ENCODE measurements at regions of chr2 and their contacts with region 1.

Region 1: DNA sequence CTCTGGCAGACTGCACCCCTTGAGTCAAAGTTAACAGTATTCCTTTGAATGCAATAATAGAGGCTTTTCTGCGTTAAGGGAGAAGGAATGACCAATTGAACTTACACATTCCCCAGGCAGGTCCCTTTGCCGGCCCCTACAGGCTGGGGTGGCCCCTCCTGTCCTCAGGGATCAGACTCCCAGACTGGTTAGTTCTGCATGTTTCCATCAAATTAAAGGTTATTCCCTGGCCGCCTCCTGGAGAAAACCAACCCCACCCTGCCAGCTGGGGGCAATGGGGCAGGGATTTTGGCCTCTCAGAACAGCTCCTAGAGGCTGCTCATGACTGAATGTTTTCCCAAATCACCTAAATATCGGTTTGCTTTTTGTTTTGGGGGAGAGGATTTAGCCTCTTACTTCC is 199.6 kb downstream of the MGAT5 start:
- DNase-seq: no peak
- H3K4me3 Mint-ChIP-seq: no peak overlapping the region
- H3K27ac Mint-ChIP-seq: no peak overlapping the region
- H3K4me1 Mint-ChIP-seq: peaks cover 5% of the 10 kb centered on the region
- H3K27me3 Mint-ChIP-seq: no peaks in the 10 kb centered on the region
- CTCF ChIP-seq: no peak

Region 2: GRCh38 chr2:133886735-133887660 is 566.5 kb before region 1 on chr2:
- CTCF ChIA-PET with region 1: interaction called, 23 read pairs
- POLR2A ChIA-PET with region 1: no interaction called
- intact Hi-C with region 1: loop called (anchors 1 kb)
- DNase-seq: peak; percentile 87
- H3K4me3 Mint-ChIP-seq: no peak overlapping the region
- H3K27ac Mint-ChIP-seq: no peak overlapping the region
- H3K4me1 Mint-ChIP-seq: peaks cover 7% of the 10 kb centered on the region
- H3K27me3 Mint-ChIP-seq: peaks cover 14% of the 10 kb centered on the region
- CTCF ChIP-seq: peak; percentile 52

Region 3: DNA sequence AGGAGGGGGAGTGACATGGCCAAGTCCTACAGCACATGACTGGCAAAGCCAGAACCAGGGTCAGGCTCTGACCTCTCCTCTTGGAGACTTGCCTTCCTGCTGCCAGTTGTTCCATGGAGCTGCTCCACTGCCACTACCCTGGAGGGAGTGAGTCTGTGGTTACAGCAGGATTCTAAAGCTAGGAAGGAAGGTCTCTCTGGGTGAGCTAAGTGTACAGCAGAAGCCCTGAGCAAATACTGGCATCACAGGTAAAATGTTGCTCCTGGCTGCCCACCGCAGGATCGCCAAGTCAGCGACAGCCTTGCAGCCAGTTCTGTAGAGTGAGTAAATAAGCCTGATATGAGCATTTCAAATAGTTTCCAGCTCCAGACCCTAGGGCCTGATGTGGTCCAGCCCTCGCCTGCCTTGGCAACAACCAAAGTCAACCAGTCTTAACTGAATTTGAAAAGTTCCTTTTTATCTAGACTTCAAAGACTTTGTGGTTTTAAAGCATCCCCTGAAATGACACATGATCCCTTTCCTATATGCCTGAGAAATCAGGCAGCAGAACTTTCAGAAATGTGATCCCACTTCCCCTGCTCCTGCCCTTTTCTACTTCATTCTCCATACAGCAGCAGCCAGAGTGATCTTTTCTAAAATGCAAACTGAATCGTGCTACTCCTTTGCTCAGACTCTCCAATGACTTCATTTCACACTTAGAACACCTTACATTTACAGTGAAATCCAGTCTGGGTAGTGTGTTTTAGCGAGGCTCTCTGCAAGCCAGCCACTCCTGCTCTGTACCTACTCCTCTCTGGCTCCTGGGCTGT is 85.3 kb before region 1 on chr2:
- CTCF ChIA-PET with region 1: interaction called, 14 read pairs
- POLR2A ChIA-PET with region 1: no interaction called
- intact Hi-C with region 1: no loop called
- DNase-seq: no peak
- H3K4me3 Mint-ChIP-seq: no peak overlapping the region
- H3K27ac Mint-ChIP-seq: no peak overlapping the region
- H3K4me1 Mint-ChIP-seq: peaks cover 10% of the 10 kb centered on the region
- H3K27me3 Mint-ChIP-seq: no peaks in the 10 kb centered on the region
- CTCF ChIP-seq: no peak

Region 4: DNA sequence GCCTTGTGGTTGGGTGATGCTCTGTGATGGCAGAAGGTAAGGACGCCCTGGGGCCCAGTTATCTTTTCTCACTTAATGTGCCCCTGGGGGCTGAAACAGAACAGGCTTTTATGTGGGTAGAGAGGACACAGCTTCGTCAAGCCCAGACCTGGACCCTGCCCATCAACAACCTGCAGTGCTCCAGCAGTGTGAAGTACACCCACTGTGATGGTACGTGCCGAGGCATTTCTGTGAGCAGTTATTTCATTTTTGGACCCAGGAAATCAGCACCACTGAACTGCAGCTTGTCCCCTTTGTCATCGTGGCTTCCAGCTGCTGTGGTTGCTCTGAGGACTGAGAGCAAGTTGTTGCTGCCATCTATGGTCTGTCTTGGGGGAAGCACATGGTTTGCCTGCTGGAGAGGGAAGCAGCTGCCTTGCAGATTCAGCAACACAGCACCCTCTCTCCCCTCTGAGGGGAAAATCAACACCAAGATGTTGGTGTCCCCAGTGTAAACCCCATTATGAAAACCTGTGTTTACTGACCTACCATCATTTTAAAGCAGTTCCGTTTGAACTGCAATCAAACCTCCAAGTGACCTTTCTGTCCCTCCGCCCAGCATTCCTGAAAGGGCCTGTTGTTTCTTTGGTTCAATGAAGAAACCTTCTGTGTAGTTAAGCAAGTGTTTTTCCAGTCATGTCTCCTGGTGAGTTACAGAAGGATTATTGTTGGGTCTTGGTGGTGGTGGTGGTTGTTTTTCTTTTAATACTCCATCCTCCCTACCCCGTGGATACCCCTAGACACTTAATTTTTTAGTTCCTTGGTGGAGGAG is 41.4 kb before region 1 on chr2:
- CTCF ChIA-PET with region 1: interaction called, 12 read pairs
- POLR2A ChIA-PET with region 1: no interaction called
- intact Hi-C with region 1: no loop called
- DNase-seq: peak; percentile 66
- H3K4me3 Mint-ChIP-seq: no peak overlapping the region
- H3K27ac Mint-ChIP-seq: no peak overlapping the region
- H3K4me1 Mint-ChIP-seq: peaks cover 23% of the 10 kb centered on the region
- H3K27me3 Mint-ChIP-seq: no peaks in the 10 kb centered on the region
- CTCF ChIP-seq: peak; percentile 54

Region 5: GRCh38 chr2:134431838-134432434 is 21.5 kb before region 1 on chr2:
- CTCF ChIA-PET with region 1: interaction called, 52 read pairs
- POLR2A ChIA-PET with region 1: no interaction called
- intact Hi-C with region 1: no loop called
- DNase-seq: no peak
- H3K4me3 Mint-ChIP-seq: no peak overlapping the region
- H3K27ac Mint-ChIP-seq: peak overlapping the region; percentile 36
- H3K4me1 Mint-ChIP-seq: peaks cover 22% of the 10 kb centered on the region
- H3K27me3 Mint-ChIP-seq: no peaks in the 10 kb centered on the region
- CTCF ChIP-seq: no peak

Region 6: GRCh38 chr2:134532537-134532936 is 79.1 kb after region 1 on chr2:
- CTCF ChIA-PET with region 1: no interaction called
- POLR2A ChIA-PET with region 1: no interaction called
- intact Hi-C with region 1: no loop called
- DNase-seq: no peak
- H3K4me3 Mint-ChIP-seq: no peak overlapping the region
- H3K27ac Mint-ChIP-seq: no peak overlapping the region
- H3K4me1 Mint-ChIP-seq: no peaks in the 10 kb centered on the region
- H3K27me3 Mint-ChIP-seq: no peaks in the 10 kb centered on the region
- CTCF ChIP-seq: no peak

Region 7: DNA sequence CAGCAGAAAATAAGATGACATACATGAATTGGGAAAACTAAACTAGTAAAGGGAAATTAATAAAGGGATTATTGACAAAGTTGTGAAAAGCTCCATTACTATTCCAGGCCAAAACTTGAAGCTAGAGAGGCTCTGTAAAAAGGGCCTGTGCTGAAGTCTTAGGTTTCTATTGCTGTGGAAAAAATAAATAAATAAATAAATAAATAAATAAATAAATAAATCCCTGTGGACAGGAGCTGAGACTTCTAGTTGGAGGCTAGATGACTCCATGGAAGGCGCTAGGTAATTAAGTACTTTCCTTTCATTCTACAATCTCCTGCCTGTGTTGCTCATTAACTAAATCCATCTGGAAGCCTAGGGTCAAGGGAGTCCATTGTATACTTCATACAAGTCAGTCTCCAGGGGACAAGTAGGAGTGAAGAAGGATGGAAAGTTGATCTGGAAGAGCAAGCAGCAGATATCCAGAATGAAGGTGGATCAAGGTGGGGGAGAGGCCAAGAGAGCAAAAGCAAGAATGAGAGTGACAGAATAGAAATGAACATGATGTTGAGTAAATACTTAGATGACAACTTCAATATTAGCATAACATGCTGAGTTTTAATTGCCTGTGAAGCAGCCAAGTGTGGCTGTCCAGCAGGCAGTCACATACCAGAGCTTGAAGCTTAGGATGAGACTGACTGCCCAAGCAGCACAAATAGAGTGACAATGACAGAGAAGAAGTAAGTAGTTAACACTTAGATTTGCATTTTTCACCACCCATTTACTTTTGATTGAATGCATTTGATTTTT is 439.0 kb after region 1 on chr2:
- CTCF ChIA-PET with region 1: interaction called, 31 read pairs
- POLR2A ChIA-PET with region 1: no interaction called
- intact Hi-C with region 1: no loop called
- DNase-seq: no peak
- H3K4me3 Mint-ChIP-seq: no peak overlapping the region
- H3K27ac Mint-ChIP-seq: no peak overlapping the region
- H3K4me1 Mint-ChIP-seq: no peaks in the 10 kb centered on the region
- H3K27me3 Mint-ChIP-seq: no peaks in the 10 kb centered on the region
- CTCF ChIP-seq: no peak

Measured in MCF 10A (cell line).